ENCODE measurements at regions of chr1 and their contacts with region 1.

Region 1: DNA sequence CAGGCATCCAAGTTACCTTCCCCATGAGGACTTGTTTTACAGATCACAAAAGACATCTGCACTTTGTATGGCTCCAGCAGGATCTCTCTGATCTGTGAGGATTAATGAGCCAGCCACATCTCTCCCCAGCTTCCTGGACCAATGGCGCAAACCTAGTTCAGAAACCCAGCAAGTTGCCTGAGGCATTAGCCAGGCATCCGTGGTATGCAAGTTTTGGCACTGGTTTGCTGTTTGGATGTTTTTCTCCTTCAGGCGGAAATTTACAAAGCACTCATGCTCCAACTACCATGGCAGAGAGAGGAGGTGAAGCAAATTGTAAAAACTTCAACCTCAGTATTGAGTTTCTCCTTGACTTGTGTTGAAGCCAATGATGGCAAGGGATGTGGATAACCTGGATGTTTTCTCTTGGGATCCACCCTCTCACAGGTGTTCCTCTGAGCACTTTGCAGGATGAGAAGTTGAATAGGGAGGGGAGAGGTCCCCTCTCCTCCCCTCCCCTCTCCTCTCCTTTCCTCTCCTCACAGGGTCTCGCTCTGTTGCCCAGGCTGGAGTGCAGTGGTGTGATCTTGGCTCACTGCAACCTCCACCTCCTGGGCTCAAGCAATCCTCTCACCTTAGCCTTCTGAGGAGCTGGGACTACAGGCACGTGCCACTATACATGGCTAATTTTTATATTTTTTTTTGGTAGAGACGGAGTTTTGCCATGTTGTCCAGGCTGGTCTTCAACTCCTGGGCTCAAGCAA is 25.6 kb upstream of the ENO1 start:
- DNase-seq: peak; percentile 22 to 92
- H3K4me3 ChIP-seq: no peak overlapping the region
- H3K27ac ChIP-seq: peak overlapping the region; percentile 83 to 93
- H3K4me1 ChIP-seq: peaks cover 9 to 34% of the 10 kb centered on the region in 2 donors
- H3K27me3 ChIP-seq: no peaks in the 10 kb centered on the region
- CTCF ChIP-seq: no peak

Region 2: GRCh38 chr1:8858888-8859706 is 45.0 kb before region 1 on chr1:
- intact Hi-C with region 1: loop called (anchors 1 kb)
- DNase-seq: no peak
- H3K4me3 ChIP-seq: no peak overlapping the region
- H3K27ac ChIP-seq: peak overlapping the region; percentile 56 to 64
- H3K4me1 ChIP-seq: peaks cover 6 to 25% of the 10 kb centered on the region in 2 donors
- H3K27me3 ChIP-seq: no peaks in the 10 kb centered on the region
- CTCF ChIP-seq: peak; percentile 67 to 69 (median 68)

Region 3: DNA sequence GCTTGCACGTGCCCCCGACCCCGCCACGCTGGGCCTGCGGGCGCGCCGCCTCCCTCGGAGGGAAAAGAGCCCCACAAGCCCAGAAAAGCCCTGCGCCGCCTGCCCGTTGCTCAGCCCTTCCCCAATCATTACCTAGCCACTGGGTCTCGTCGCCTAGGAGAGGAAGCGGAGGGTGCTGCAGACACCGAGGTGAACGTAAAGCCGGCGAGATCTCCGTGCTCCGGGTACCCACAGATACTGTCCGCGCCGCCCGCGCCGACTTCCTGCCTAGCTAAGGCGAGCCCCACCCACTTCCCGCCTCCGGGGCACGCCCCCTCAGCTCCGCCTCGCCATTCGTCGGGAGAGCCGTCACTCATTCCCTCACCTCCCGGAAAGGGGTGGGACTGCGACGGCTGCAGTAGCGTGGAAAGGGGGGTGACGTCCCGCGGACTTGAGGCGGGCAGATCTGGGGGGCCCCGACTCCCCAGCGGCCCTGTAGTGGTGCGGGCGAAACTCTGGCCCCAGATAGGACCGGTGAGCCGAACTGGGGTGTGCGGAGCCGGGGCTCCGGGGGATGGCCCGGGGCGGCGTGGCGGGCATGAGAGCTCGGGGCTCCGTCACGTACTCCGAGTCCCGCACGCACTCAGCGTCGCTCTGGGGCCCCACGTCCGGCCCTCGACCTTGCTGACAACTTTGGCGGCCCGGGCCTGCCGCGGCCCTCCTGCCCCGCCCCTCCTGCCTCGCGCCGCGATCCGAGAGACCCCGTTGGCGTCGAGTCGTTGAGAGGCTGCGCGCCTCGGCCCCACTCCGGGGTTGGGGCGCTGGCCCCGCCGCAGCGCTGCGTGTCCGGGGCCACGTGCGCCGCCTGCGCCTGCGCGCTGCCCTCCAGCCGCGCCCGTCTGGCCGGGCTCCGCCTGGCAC is 25.4 kb before region 1 on chr1 and contains the start of gene ENO1:
- intact Hi-C with region 1: loop called (anchors 1 kb)
- DNase-seq: peak; percentile 91 to 99
- H3K4me3 ChIP-seq: peak within 1 kb of the TSS; percentile 72 to 87
- H3K27ac ChIP-seq: peak within 1 kb of the TSS; percentile 96 to 99
- H3K4me1 ChIP-seq: peaks cover 15 to 39% of the 10 kb centered on the region in 2 donors
- H3K27me3 ChIP-seq: no peaks in the 10 kb centered on the region
- CTCF ChIP-seq: no peak
- total RNA-seq, gene ENO1: 637 TPM

Region 4: DNA sequence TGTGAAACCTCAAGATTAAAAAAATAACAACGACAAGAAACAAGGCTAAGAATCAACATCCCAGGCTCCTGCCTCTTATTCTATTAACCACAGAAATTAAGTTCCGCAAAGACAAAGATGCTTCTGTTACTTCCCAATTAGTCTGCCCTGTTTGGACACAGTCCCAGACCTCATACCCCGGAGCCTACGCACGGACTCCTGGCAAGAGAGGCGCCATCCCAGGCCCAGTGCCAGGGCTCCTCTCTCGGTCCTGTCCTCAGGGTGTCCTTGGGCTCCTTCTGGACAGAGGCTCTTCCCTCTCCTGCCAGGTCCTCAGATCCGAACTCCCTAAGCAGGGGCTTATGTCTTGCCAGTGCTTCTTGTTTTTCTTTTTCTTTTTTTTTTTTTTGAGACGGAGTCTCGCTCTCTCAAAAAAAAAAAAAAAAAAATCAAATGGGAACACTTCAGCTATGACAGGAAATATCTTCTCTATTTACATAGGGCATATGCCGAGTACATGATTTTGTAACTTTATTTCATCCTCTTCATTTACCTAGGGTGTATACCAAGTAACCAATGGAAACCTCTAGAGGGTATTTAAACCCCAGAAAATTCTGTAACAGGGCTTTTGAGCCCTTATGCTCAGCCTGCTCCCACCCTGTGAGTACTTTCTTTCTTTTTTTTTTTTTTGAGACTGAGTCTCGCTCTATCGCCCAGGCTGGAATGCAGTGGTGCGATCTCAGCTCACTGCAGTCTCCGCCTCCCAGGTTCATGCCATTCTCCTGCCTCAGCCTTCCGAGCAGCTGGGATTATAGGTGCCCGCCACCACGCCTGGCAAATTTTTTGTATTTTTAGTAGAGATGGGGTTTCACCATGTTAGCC is 13.9 kb before region 1 on chr1:
- intact Hi-C with region 1: loop called (anchors 2 kb)
- DNase-seq: peak; percentile 39 to 91
- H3K4me3 ChIP-seq: peak overlapping the region; percentile 16 to 30
- H3K27ac ChIP-seq: peak overlapping the region; percentile 77 to 79
- H3K4me1 ChIP-seq: peaks cover 0 to 14% of the 10 kb centered on the region in 2 donors
- H3K27me3 ChIP-seq: no peaks in the 10 kb centered on the region
- CTCF ChIP-seq: no peak

Region 5: DNA sequence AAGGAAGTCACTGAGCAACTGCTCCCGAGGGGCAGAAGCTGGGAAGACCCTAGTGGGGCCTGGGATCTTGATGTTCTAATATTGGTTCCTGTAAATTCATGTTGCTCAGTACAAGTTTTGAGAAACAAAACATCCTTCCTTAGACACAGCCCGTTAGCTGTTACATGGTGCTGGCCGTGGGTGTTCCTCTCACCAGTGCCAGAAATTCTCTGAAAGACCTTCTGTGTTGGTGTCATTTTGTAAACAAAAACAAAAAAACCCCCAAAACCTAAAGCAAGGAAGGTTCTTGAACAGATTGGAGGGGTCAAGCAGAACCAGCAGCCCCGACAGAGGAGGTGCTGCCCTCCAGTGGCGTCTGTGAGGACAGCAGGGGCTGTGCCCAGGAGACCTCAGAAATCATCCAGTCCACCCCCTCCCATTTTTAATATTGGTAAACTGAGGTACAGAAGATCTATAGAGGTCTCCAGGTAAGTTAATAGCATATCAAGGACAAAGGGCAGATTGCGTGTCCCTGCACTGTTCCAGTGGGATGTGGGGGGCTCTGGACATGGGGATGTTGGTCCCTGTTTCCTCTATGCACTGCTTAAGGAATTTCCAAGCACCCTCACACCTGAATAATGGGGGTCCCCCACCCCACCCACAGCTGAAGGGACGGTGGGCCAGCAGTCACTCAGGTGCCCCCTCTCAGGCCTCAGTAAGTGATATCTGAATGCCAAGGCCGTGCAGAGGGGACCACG is 84.0 kb after region 1 on chr1:
- intact Hi-C with region 1: loop called (anchors 1 kb)
- DNase-seq: no peak
- H3K4me3 ChIP-seq: no peak overlapping the region
- H3K27ac ChIP-seq: peak overlapping the region in 1 of 2 donors; percentile 6
- H3K4me1 ChIP-seq: peaks cover 0 to 10% of the 10 kb centered on the region in 2 donors
- H3K27me3 ChIP-seq: no peaks in the 10 kb centered on the region
- CTCF ChIP-seq: peak; percentile 86 to 95 (median 88)